ENCODE measurements at regions of chr19 and their contacts with region 1.

Region 1: DNA sequence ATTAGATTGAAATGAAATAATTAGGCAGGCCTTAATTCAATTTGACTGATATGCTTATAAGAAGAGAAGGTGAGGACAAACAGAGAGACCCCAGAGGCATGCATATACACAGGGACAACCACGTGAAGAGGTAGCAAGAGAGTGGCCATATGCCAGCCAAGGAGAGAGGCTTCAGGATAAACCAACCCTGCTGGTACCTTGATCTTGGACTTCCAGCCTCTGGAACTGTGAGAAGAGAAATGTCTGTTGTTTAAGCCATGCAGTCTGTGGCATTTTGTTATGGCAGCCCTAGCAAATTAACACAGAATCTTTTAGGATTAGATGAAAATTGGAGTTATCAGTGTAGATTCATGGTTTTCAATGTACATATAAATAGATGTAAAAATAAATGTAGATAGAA is 120.1 kb downstream of the KCTD15 start:
- DNase-seq: no peak
- ATAC-seq: no peak
- H3K4me3 ChIP-seq: no peak overlapping the region
- H3K27ac ChIP-seq: no peak overlapping the region
- H3K4me1 ChIP-seq: no peaks in the 10 kb centered on the region
- H3K27me3 ChIP-seq: no peaks in the 10 kb centered on the region
- CTCF ChIP-seq: no peak
- POLR2A ChIP-seq: no peak
- RAD21 ChIP-seq: no peak

Region 2: GRCh38 chr19:33740811-33741396 is 175.9 kb before region 1 on chr19:
- CTCF ChIA-PET with region 1: no interaction called
- POLR2A ChIA-PET with region 1: no interaction called
- dilution Hi-C with region 1: no loop called
- in situ Hi-C with region 1: no loop called
- intact Hi-C with region 1: no loop called
- DNase-seq: peak; percentile 38
- ATAC-seq: peak; percentile 67; the same call in 1 of the 2 replicates
- H3K4me3 ChIP-seq: no peak overlapping the region
- H3K27ac ChIP-seq: no peak overlapping the region
- H3K4me1 ChIP-seq: no peaks in the 10 kb centered on the region
- H3K27me3 ChIP-seq: no peaks in the 10 kb centered on the region
- CTCF ChIP-seq: no peak
- POLR2A ChIP-seq: no peak
- RAD21 ChIP-seq: no peak

Region 3: GRCh38 chr19:33977756-33978685 is 61.2 kb after region 1 on chr19:
- CTCF ChIA-PET with region 1: no interaction called
- POLR2A ChIA-PET with region 1: no interaction called
- dilution Hi-C with region 1: no loop called
- in situ Hi-C with region 1: no loop called
- intact Hi-C with region 1: loop called (anchors 2 kb)
- DNase-seq: no peak
- ATAC-seq: no peak
- H3K4me3 ChIP-seq: no peak overlapping the region
- H3K27ac ChIP-seq: no peak overlapping the region
- H3K4me1 ChIP-seq: no peaks in the 10 kb centered on the region
- H3K27me3 ChIP-seq: no peaks in the 10 kb centered on the region
- CTCF ChIP-seq: no peak
- POLR2A ChIP-seq: no peak
- RAD21 ChIP-seq: no peak

Measured in IMR-90 (cell line).